HepG2 (cell line): ENCODE measurements at regions of chr13 and their contacts with region 1.

Region 1: GRCh38 chr13:57624565-57625435 is 6.7 kb upstream of the PCDH17 start:
- DNase-seq: peak; percentile 56
- ATAC-seq: peak; percentile 83
- H3K4me3 ChIP-seq: no peak overlapping the region
- H3K27ac ChIP-seq: no peak overlapping the region
- H3K4me1 ChIP-seq: no peaks in the 10 kb centered on the region
- H3K27me3 ChIP-seq: peaks cover 0 to 7% of the 10 kb centered on the region in 2 experiments; a peak in 2 of 5 replicates
- CTCF ChIP-seq: peak; percentile 62
- EP300 ChIP-seq: no peak
- POLR2A ChIP-seq: no peak
- RAD21 ChIP-seq: no peak

Region 2: DNA sequence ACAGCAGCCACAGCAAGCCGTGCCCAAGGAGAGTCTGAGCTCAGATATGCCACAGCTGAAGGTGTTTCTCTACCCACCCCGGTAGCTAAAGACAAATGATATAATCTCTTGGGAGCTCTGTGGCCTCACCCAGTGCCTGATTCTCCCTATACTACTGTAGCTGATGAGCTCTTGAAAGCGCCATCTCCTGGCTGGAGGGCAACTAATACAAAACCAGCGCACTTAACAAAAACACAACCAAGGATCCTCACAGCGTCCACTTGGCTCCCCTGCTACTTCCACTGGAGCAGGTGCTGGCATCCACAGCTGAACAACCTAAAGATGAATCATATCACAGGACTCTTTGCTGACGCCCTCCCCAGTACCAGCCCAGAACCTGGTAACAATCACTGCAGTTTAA is 1218.8 kb after region 1 on chr13:
- CTCF ChIA-PET with region 1: no interaction called
- POLR2A ChIA-PET with region 1: no interaction called
- in situ Hi-C with region 1: no loop called
- intact Hi-C with region 1: loop called (anchors 2 kb)
- DNase-seq: peak; percentile 1
- ATAC-seq: peak; percentile 35; the same call in 2 of the 3 replicates
- H3K4me3 ChIP-seq: no peak overlapping the region
- H3K27ac ChIP-seq: no peak overlapping the region
- H3K4me1 ChIP-seq: no peaks in the 10 kb centered on the region
- H3K27me3 ChIP-seq: no peaks in the 10 kb centered on the region
- CTCF ChIP-seq: 0 out of 2 replicates have a peak, but pooled peaks have one; percentile 3
- EP300 ChIP-seq: no peak
- POLR2A ChIP-seq: no peak
- RAD21 ChIP-seq: no peak

Region 3: GRCh38 chr13:59178344-59178743 is 1553.5 kb after region 1 on chr13:
- CTCF ChIA-PET with region 1: no interaction called
- POLR2A ChIA-PET with region 1: no interaction called
- in situ Hi-C with region 1: no loop called
- intact Hi-C with region 1: loop called (anchors 1 kb)
- DNase-seq: no peak
- ATAC-seq: no peak
- H3K4me3 ChIP-seq: no peak overlapping the region
- H3K27ac ChIP-seq: no peak overlapping the region
- H3K4me1 ChIP-seq: no peaks in the 10 kb centered on the region
- H3K27me3 ChIP-seq: no peaks in the 10 kb centered on the region
- CTCF ChIP-seq: 0 out of 2 replicates have a peak, but pooled peaks have one; percentile 11
- EP300 ChIP-seq: no peak
- POLR2A ChIP-seq: no peak
- RAD21 ChIP-seq: no peak

Region 4: GRCh38 chr13:59318320-59318930 is 1693.6 kb after region 1 on chr13:
- CTCF ChIA-PET with region 1: interaction called, 13 read pairs
- POLR2A ChIA-PET with region 1: no interaction called
- in situ Hi-C with region 1: loop called (anchors 10 kb)
- intact Hi-C with region 1: no loop called
- DNase-seq: peak; percentile 58
- ATAC-seq: peak; percentile 77
- H3K4me3 ChIP-seq: no peak overlapping the region
- H3K27ac ChIP-seq: no peak overlapping the region
- H3K4me1 ChIP-seq: no peaks in the 10 kb centered on the region
- H3K27me3 ChIP-seq: no peaks in the 10 kb centered on the region
- CTCF ChIP-seq: peak; percentile 73
- EP300 ChIP-seq: no peak
- POLR2A ChIP-seq: no peak
- RAD21 ChIP-seq: no peak